Right lobe of liver (tissue), 6 donors: ENCODE measurements at regions of chr21 and their contacts with region 1.

Region 1: DNA sequence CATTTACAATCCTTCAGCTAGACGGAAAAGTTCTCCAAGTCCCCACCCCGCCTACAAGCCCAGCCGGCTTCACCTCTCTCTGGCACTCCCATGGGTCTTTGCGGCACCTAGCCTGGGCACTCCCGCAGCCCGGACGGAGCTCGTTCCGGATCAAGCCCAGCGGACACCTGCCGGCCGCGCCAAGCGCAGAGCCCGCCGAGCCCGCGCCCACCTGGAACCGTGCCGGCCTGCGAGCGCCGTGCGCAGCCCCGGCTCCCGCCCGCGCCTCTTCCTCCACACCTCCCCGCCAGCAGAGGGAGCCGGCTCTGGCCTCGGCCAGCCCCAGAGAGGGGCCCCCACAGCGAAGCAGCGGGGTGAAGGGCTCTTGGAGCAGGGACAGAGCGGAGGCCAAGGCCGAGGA is 50.0 kb upstream of the KRTAP19-8 start:
- DNase-seq: no peak
- ATAC-seq: peak in 1 of 4 donors; percentile 21
- H3K4me3 ChIP-seq: no peak overlapping the region
- H3K27ac ChIP-seq: no peak overlapping the region
- H3K4me1 ChIP-seq: no peaks in the 10 kb centered on the region
- H3K27me3 ChIP-seq: no peaks in the 10 kb centered on the region
- CTCF ChIP-seq: no peak
- POLR2A ChIP-seq: no peak

Region 2: GRCh38 chr21:30340441-30341241 is 747.7 kb before region 1 on chr21:
- intact Hi-C with region 1: loop called (anchors 10 kb)
- DNase-seq: no peak
- ATAC-seq: peak; percentile 69 to 74 (median 72)
- H3K4me3 ChIP-seq: no peak overlapping the region
- H3K27ac ChIP-seq: no peak overlapping the region
- H3K4me1 ChIP-seq: no peaks in the 10 kb centered on the region
- H3K27me3 ChIP-seq: no peaks in the 10 kb centered on the region
- CTCF ChIP-seq: peak; percentile 73 to 92 (median 83)
- POLR2A ChIP-seq: no peak